Thyroid gland (tissue), 4 donors: ENCODE measurements at regions of chr2 and their contacts with region 1.

Region 1: GRCh38 chr2:106189764-106190468 is 4.2 kb downstream of the UXS1 start:
- DNase-seq: no peak
- H3K4me3 ChIP-seq: no peak overlapping the region
- H3K27ac ChIP-seq: no peak overlapping the region
- H3K4me1 ChIP-seq: peaks cover 8 to 10% of the 10 kb centered on the region in 2 donors
- H3K27me3 ChIP-seq: no peaks in the 10 kb centered on the region
- CTCF ChIP-seq: no peak
- POLR2A ChIP-seq: no peak

Region 2: DNA sequence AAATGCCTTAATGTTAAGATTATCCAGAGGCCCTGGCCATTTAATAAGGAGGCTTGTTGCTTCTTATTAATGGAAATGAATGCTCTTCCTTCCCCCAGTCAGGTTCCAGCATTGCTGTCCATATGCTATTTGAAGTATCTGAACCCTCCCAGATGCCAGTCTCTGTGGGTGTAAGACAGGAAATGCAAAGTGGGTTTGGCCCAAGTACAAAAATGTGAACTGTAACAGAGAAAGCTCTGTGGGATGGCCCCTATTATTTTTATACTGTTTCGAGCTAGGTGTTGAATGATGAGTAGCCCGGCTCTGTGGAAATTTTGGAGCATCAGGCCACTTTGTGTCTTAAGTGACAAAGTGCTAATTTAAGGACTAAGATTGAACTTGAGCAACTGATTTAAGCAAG is 136.8 kb before region 1 on chr2:
- intact Hi-C with region 1: no loop called
- DNase-seq: no peak
- H3K4me3 ChIP-seq: no peak overlapping the region
- H3K27ac ChIP-seq: no peak overlapping the region
- H3K4me1 ChIP-seq: no peaks in the 10 kb centered on the region
- H3K27me3 ChIP-seq: no peaks in the 10 kb centered on the region
- CTCF ChIP-seq: no peak
- POLR2A ChIP-seq: no peak

Region 3: DNA sequence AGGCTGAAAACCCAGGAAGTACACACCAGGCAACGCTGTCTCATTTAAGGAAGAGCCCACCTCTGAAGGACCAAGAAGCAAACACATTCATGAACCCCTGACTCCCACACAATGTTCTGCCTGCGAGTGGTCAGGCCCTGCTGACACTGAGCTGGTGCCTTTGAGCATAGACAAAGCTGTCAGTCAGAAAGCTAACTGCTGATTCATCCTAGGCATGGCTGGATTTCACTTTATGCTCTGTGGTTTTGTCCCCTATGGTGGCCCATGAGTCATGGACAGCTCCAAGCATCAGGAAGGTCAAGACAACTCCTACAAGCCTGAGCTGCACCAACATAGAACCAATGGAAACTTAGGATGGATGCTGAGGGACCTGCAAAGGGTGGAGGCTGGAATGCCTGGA is 74.7 kb before region 1 on chr2:
- intact Hi-C with region 1: loop called (anchors 10 kb)
- DNase-seq: no peak
- H3K4me3 ChIP-seq: no peak overlapping the region
- H3K27ac ChIP-seq: no peak overlapping the region
- H3K4me1 ChIP-seq: no peaks in the 10 kb centered on the region
- H3K27me3 ChIP-seq: no peaks in the 10 kb centered on the region
- CTCF ChIP-seq: no peak
- POLR2A ChIP-seq: no peak